ENCODE measurements at regions of chr6 and their contacts with region 1.

Region 1: DNA sequence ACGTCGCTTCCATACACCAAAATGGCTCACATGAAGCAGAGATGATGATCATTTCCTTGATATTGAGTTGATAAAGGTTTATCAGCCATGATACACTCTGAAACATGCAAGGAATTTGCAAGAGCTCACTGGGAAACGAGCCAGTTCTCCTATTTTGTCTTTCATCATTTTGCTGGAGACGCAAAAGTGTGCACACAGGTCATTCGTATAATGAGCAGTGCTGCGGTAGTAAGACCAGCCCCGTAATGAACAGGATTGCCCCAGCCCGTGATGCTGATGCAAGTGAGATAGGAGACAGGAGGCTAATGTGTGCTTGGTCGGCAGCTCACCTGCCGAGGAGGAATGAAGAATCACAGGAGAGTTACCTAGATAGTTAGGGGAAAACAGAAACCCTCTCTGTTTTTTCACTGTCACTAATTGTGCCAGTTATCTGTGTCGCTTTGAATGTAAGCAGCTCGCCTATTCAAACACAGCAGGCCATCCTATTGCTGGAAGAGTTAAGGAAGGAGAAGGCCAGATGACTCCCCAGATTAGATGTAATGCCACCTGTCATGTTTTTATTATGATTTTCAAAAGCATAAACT is 391.8 kb downstream of the SAMD5 start:
- DNase-seq: no peak
- ATAC-seq: no peak

Region 2: DNA sequence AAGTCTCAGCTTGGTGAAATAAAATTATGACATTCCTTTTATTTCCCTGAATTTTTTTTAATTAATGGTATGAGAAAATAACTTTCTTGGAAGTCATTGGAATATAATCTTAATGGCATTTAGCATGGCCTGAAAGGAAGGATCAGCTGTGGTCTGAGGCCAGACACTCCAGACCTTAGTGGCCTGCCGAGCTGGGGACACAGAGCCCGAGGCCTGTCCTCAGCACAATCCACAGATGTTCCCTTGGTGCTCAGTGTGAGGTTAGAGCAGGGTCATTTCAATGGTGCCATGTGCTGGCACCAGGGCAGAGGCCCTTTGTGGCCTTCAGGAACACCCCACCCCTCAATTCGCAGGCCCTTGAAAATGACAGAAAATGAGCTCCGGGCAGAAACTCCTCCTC is 1181.0 kb before region 1 on chr6:
- intact Hi-C with region 1: loop called (anchors 5 kb)
- DNase-seq: no peak
- ATAC-seq: no peak